ENCODE measurements at regions of chrX and their contacts with region 1.

Region 1: DNA sequence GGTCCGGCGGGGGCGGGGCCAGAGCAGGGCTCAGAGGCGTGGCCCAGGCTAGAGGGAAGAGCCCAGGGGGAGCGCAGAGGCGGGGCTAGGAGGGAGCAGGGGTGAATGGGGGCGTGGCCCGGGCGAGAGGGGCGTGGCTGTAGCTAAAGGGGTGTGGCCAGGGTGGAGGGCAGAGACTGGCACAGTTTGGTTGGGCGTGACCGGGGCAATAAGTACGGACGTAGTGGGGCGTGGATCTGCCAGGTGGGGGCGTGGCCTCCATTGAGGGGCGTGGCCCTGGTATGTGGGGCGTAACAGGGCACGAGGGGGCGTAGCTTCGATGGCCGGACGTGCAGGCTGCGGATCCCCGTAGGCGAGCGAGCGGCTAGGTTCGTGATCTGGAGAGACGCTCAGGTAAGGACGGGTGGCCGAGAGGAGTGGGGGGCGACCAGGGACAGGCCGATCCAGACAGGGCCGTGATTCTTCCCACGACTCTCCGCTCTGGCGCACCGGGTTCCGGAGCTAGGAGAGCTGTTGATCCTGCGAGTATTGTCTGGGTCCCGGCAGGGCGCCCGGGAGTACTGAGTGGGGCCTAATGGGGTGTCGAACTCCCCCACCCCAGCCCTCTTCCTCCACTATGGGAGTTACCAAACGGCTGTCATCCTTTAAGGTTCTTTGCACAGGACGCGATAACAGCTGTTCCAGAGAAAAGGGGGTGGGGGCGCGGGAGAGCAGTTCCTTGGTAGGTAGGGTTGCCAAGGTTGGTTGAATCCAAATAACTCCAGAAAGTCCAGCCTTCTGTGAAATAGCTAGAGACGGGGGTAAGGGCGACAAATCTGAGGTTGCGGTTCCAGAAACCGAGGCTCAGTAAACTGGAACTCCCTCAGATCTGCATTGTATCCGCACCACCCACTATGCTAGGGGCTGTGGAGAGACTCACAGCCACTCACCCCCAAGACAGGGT is at the start of gene CA5B:
- DNase-seq: peak; percentile 97
- ATAC-seq: peak; percentile 94
- H3K4me3 Mint-ChIP-seq: peak within 1 kb of the TSS; percentile 88
- H3K27ac Mint-ChIP-seq: peak within 1 kb of the TSS; percentile 80
- H3K4me1 Mint-ChIP-seq: peaks cover 33% of the 10 kb centered on the region
- H3K27me3 Mint-ChIP-seq: no peaks in the 10 kb centered on the region
- CTCF ChIP-seq: no peak
- total RNA-seq, gene CA5B: 9.9 and 10.6 TPM in 2 replicates

Region 2: GRCh38 chrX:14660970-14661369 is 1077.3 kb before region 1 on chrX:
- CTCF ChIA-PET with region 1: no interaction called
- POLR2A ChIA-PET with region 1: no interaction called
- intact Hi-C with region 1: no loop called
- DNase-seq: no peak
- ATAC-seq: no peak
- H3K4me3 Mint-ChIP-seq: no peak overlapping the region
- H3K27ac Mint-ChIP-seq: no peak overlapping the region
- H3K4me1 Mint-ChIP-seq: no peaks in the 10 kb centered on the region
- H3K27me3 Mint-ChIP-seq: no peaks in the 10 kb centered on the region
- CTCF ChIP-seq: no peak

Region 3: GRCh38 chrX:15335135-15336022 is 402.9 kb before region 1 on chrX and contains the start of gene PIGA:
- CTCF ChIA-PET with region 1: no interaction called
- POLR2A ChIA-PET with region 1: no interaction called
- intact Hi-C with region 1: loop called (anchors 1 kb)
- DNase-seq: peak; percentile 77
- ATAC-seq: peak; percentile 94
- H3K4me3 Mint-ChIP-seq: peak within 1 kb of the TSS; percentile 94
- H3K27ac Mint-ChIP-seq: peak within 1 kb of the TSS; percentile 91
- H3K4me1 Mint-ChIP-seq: peaks cover 19% of the 10 kb centered on the region
- H3K27me3 Mint-ChIP-seq: no peaks in the 10 kb centered on the region
- CTCF ChIP-seq: no peak
- total RNA-seq, gene PIGA: 15.7 and 24.9 TPM in 2 replicates

Region 4: GRCh38 chrX:15781961-15782699 is 43.9 kb after region 1 on chrX:
- CTCF ChIA-PET with region 1: no interaction called
- POLR2A ChIA-PET with region 1: interaction called, 12 read pairs
- intact Hi-C with region 1: loop called (anchors 2 kb)
- DNase-seq: no peak
- ATAC-seq: peak; percentile 81
- H3K4me3 Mint-ChIP-seq: peak overlapping the region; percentile 83
- H3K27ac Mint-ChIP-seq: peak overlapping the region; percentile 98
- H3K4me1 Mint-ChIP-seq: peaks cover 16% of the 10 kb centered on the region
- H3K27me3 Mint-ChIP-seq: no peaks in the 10 kb centered on the region
- CTCF ChIP-seq: no peak

Region 5: GRCh38 chrX:15903186-15903681 is 165.0 kb after region 1 on chrX:
- CTCF ChIA-PET with region 1: no interaction called
- POLR2A ChIA-PET with region 1: no interaction called
- intact Hi-C with region 1: loop called (anchors 5 kb)
- DNase-seq: peak; percentile 17
- ATAC-seq: peak; percentile 88
- H3K4me3 Mint-ChIP-seq: peak overlapping the region; percentile 57
- H3K27ac Mint-ChIP-seq: peak overlapping the region; percentile 88
- H3K4me1 Mint-ChIP-seq: peaks cover 26% of the 10 kb centered on the region
- H3K27me3 Mint-ChIP-seq: no peaks in the 10 kb centered on the region
- CTCF ChIP-seq: no peak

Region 6: DNA sequence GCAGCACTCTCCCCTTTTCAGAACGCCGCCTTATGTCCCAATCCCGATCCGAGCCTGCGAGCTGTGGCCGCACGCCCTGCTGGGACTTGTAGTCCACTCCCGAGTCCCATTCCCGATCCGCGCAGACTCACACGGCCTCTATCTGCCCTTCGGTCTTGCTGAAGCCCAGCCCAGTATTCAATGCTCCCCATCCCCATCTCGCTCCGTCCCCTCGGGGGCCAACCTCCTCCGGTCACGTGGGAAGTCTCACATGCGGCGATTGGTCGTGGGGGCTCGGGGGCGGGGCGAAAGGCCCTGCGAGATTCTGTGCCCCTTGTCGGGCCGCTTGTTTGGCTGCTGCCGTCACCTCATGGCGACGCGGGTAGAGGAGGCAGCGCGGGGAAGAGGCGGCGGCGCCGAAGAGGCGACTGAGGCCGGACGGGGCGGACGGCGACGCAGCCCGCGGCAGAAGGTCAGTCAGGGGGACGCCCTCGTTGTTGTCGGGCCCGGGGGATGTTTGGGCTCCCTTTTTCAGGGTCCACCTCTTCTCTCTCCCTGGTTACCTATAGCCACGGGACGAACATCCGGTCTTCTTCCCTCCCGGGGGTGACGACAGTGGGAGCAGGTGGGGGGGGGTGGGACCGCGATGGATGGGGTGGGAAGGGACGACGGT is 1048.0 kb after region 1 on chrX and contains the start of gene TXLNG:
- CTCF ChIA-PET with region 1: no interaction called
- POLR2A ChIA-PET with region 1: no interaction called
- intact Hi-C with region 1: loop called (anchors 5 kb)
- DNase-seq: peak; percentile 81
- ATAC-seq: peak; percentile 95
- H3K4me3 Mint-ChIP-seq: peak within 1 kb of the TSS; percentile 97
- H3K27ac Mint-ChIP-seq: peak within 1 kb of the TSS; percentile 90
- H3K4me1 Mint-ChIP-seq: peaks cover 18% of the 10 kb centered on the region
- H3K27me3 Mint-ChIP-seq: no peaks in the 10 kb centered on the region
- CTCF ChIP-seq: no peak
- total RNA-seq, gene TXLNG: 12.7 and 13.1 TPM in 2 replicates